Transverse colon (tissue), 4 donors: ENCODE measurements at regions of chr10 and their contacts with region 1.

Region 1: GRCh38 chr10:101297901-101298486 is 56.0 kb upstream of the BTRC start:
- DNase-seq: peak; percentile 66
- H3K4me3 ChIP-seq: no peak overlapping the region
- H3K27ac ChIP-seq: no peak overlapping the region
- H3K4me1 ChIP-seq: peaks cover 0 to under 1% (median 0%) of the 10 kb centered on the region in 4 donors
- H3K27me3 ChIP-seq: peaks cover 75% of the 10 kb centered on the region
- CTCF ChIP-seq: peak; percentile 67 to 87 (median 80)
- EP300 ChIP-seq: no peak
- POLR2A ChIP-seq: no peak

Region 2: DNA sequence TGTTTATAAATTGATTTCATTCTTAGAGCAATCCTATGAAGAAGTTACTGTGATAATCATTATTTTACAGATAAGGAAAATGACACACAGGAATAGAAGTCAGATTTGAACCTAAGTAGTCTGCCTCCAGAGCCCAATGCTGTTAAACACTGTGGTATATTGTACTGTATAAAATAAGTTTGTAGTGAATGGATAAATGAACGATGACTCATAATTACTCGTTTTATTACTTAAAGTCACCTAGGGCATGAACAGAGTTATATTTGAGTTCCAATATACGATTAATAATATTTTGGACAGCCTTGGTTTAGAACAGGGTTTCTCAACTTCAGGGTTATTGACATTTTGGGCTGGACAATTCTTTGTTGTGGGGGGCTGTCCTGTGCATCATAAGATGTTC is 48.2 kb after region 1 on chr10:
- in situ Hi-C with region 1: no loop called
- intact Hi-C with region 1: no loop called
- DNase-seq: no peak
- H3K4me3 ChIP-seq: no peak overlapping the region
- H3K27ac ChIP-seq: no peak overlapping the region
- H3K4me1 ChIP-seq: no peaks in the 10 kb centered on the region
- H3K27me3 ChIP-seq: peaks cover 21% of the 10 kb centered on the region
- CTCF ChIP-seq: no peak
- EP300 ChIP-seq: no peak
- POLR2A ChIP-seq: no peak

Region 3: DNA sequence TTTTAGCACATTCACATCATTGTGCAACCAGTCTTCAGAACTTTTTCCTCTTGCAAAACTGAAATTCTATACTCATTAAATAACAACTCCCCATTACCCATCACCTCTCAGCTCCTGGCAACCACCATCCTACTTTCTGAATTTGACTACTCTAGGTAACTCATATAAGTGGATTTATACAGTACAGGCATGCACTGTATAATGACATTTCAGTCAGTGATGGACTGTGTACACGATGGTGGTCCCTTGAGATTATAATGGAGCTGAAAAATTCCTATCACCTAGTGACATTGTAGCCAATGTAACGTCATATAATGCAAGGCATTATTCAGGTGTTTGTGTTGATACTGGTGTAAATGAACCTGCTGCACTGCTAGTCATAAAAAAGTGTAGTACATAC is 116.0 kb after region 1 on chr10:
- in situ Hi-C with region 1: no loop called
- intact Hi-C with region 1: no loop called
- DNase-seq: no peak
- H3K4me3 ChIP-seq: no peak overlapping the region
- H3K27ac ChIP-seq: no peak overlapping the region
- H3K4me1 ChIP-seq: no peaks in the 10 kb centered on the region
- H3K27me3 ChIP-seq: no peaks in the 10 kb centered on the region
- CTCF ChIP-seq: no peak
- EP300 ChIP-seq: no peak
- POLR2A ChIP-seq: no peak

Region 4: DNA sequence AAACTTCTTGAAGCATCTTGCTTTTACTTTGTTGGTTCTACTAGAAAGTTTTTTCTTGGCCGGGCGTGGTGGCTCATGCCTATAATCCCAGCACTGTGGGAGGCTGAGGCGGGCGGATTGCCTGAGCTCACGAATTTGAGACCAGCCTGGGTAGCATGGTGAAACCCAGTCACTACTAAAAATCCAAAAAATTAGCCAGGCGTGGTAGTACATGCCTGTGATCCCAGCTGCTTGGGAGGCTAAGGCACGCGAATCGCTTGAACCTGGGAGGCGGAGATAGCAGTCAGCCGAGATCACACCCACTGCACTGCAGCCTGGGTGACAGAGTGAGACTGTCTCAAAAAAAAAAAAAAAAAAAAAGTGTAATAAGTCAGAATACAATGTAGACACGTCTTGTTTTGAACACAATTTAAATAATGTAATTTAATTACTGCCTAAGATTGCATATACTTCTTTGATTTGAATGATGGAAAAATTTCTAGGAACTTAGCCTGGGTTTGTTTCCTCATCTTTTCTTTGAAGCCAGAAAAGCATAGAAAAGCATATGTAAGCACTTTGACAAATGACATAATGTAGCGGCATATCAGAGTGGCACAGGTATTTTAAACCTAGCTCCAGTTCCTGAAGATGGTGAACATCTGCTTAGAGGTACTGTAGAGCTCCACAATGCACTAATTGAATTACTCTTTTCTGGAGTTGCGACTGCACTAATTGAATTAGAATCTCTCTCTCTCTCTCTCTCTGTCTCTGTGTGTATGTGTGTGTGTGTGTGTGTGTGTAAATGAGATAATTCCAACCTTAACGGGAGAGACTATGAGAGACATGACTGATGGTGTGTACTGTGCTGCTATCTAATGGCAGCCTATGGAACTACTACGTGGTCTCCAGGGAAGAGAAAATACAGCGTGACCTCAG is 143.8 kb after region 1 on chr10:
- in situ Hi-C with region 1: loop called in 1 of 4 experiments (anchors 25 kb)
- intact Hi-C with region 1: no loop called
- DNase-seq: no peak
- H3K4me3 ChIP-seq: no peak overlapping the region
- H3K27ac ChIP-seq: no peak overlapping the region
- H3K4me1 ChIP-seq: no peaks in the 10 kb centered on the region
- H3K27me3 ChIP-seq: no peaks in the 10 kb centered on the region
- CTCF ChIP-seq: peak; percentile 23 to 48 (median 40)
- EP300 ChIP-seq: no peak
- POLR2A ChIP-seq: no peak

Region 5: GRCh38 chr10:101569838-101570766 is 272.1 kb after region 1 on chr10:
- in situ Hi-C with region 1: loop called in 2 of 4 experiments (anchors 25 kb)
- intact Hi-C with region 1: no loop called
- DNase-seq: peak; percentile 87
- H3K4me3 ChIP-seq: peak overlapping the region; percentile 6 to 59 (median 38)
- H3K27ac ChIP-seq: no peak overlapping the region
- H3K4me1 ChIP-seq: peaks cover 16 to 23% (median 19%) of the 10 kb centered on the region in 4 donors
- H3K27me3 ChIP-seq: peaks cover 50% of the 10 kb centered on the region
- CTCF ChIP-seq: peak; percentile 57 to 99 (median 96)
- EP300 ChIP-seq: no peak
- POLR2A ChIP-seq: no peak